Breast epithelium (tissue), 4 donors: ENCODE measurements at regions of chr15 and their contacts with region 1.

Region 1: GRCh38 chr15:69074001-69074842 is 59.7 kb downstream of the NOX5 start:
- DNase-seq: peak; percentile 44 to 74
- H3K4me3 ChIP-seq: peak overlapping the region; percentile 59 to 72 (median 69)
- H3K27ac ChIP-seq: peak overlapping the region; percentile 75
- H3K4me1 ChIP-seq: no peaks in the 10 kb centered on the region
- H3K27me3 ChIP-seq: no peaks in the 10 kb centered on the region
- CTCF ChIP-seq: no peak
- POLR2A ChIP-seq: no peak

Region 2: GRCh38 chr15:69035205-69035917 is 38.9 kb before region 1 on chr15:
- intact Hi-C with region 1: loop called (anchors 2 kb)
- DNase-seq: peak; percentile 56 to 75
- H3K4me3 ChIP-seq: no peak overlapping the region
- H3K27ac ChIP-seq: no peak overlapping the region
- H3K4me1 ChIP-seq: peaks cover 0 to 2% of the 10 kb centered on the region in 2 donors
- H3K27me3 ChIP-seq: peaks cover 0 to 3% of the 10 kb centered on the region in 2 donors
- CTCF ChIP-seq: no peak
- POLR2A ChIP-seq: no peak

Region 3: DNA sequence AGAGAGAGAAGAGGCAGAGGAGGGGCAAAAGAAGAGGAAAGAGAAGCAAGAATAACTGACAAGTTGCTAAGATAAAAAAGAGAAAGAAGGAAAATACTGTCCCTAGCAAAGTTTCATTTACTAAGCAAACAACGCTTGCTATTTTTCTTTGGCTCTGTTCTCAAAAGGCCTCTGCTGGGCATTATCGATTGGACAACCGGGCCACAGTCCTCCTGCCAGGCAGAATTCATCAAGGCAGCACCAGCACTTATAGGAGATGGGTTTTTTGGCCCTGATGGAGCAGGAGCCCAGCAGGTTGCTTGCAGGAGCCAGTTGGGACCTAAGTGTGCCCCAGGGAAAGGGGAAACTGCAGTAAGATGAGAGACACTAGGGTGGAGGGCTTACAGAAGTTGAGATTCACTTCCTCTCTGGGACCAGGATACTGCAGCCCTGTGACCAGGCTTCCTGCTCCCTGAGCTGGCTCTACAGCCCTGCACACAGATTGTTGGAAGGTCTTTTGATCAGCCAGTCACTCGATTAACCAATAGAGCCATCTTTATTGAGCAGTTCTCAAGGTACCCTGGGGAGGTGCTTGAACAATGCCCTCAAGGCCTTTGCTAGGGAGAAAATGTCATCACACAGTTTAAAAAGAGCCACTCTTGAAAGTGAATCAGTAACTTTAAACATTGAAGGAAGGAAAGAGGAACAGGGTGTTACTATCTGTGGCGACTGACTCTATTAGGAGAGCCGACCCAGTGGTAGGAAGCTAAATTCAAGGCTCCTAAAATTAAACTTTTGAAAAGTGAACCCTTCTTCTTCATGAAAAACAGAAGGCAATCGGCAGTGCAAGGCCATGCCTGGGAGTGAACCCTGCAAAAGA is 57.4 kb after region 1 on chr15:
- intact Hi-C with region 1: loop called (anchors 2 kb)
- DNase-seq: no peak
- H3K4me3 ChIP-seq: no peak overlapping the region
- H3K27ac ChIP-seq: peak overlapping the region in 1 of 2 donors; percentile 46
- H3K4me1 ChIP-seq: peaks cover 0 to 17% of the 10 kb centered on the region in 2 donors
- H3K27me3 ChIP-seq: no peaks in the 10 kb centered on the region
- CTCF ChIP-seq: no peak
- POLR2A ChIP-seq: no peak